Heart left ventricle (tissue), 16 donors: ENCODE measurements at regions of chr1 and their contacts with region 1.

Region 1: GRCh38 chr1:174262349-174263241 is 103.3 kb downstream of the RABGAP1L start:
- DNase-seq: peak in 1 of 5 donors; percentile 30
- ATAC-seq: peak; percentile 51 to 75 (median 64)
- H3K4me3 ChIP-seq: no peak overlapping the region
- H3K27ac ChIP-seq: peak overlapping the region in 3 of 12 donors; percentile 13 to 50 (median 33)
- H3K4me1 ChIP-seq: peaks cover 0 to 36% (median 4%) of the 10 kb centered on the region in 12 donors
- H3K27me3 ChIP-seq: no peaks in the 10 kb centered on the region
- CTCF ChIP-seq: peak; percentile 57 to 77 (median 66)
- POLR2A ChIP-seq: no peak

Region 2: DNA sequence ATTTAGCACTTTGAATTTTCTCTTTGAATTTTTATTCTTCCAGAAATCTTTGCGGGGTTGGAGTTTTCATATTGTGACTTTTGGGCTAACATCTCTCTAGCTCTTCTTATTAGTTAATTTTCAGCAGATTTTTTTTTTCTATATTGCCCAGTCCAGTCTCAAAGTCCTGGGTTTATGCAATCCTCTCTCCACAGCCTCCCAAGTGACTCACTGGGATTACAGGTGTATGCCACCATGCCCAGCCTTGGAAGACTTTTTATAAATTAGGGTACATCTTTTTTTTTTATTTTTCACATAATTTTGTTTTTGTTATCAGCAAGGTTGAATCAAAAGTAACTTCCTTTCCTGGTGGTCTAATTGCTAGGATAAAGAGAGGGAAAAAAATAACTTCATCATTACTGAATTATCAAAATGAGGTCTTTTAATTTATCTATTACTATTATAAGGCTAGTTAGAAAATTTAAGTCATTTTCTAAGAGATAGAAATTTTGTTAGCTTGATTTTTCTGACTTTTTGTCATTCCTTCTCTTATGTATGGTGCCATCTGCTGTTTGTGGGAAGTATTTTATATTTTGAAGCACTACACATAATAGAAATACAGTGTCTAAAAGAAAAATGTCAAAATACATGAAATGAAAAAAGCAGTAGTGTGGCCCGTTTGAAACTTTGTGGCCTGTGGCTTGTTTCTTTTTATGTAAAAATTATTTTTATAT is 463.7 kb after region 1 on chr1:
- intact Hi-C with region 1: loop called in 7 of 10 experiments (anchors 2 to 5 kb)
- DNase-seq: no peak
- ATAC-seq: no peak
- H3K4me3 ChIP-seq: no peak overlapping the region
- H3K27ac ChIP-seq: no peak overlapping the region
- H3K4me1 ChIP-seq: peaks cover 0 to 4% (median 0%) of the 10 kb centered on the region in 12 donors
- H3K27me3 ChIP-seq: no peaks in the 10 kb centered on the region
- CTCF ChIP-seq: peak; percentile 22 to 68 (median 55)
- POLR2A ChIP-seq: no peak

Region 3: GRCh38 chr1:174743654-174744561 is 481.3 kb after region 1 on chr1:
- intact Hi-C with region 1: loop called (anchors 2 to 5 kb)
- DNase-seq: no peak
- ATAC-seq: peak in 1 of 4 donors; percentile 45
- H3K4me3 ChIP-seq: no peak overlapping the region
- H3K27ac ChIP-seq: no peak overlapping the region
- H3K4me1 ChIP-seq: peaks cover 0 to 13% (median 0%) of the 10 kb centered on the region in 12 donors
- H3K27me3 ChIP-seq: no peaks in the 10 kb centered on the region
- CTCF ChIP-seq: peak; percentile 57 to 82 (median 69)
- POLR2A ChIP-seq: no peak

Region 4: GRCh38 chr1:174982971-174983689 is 720.5 kb after region 1 on chr1:
- intact Hi-C with region 1: loop called in 3 of 10 experiments (anchors 10 kb)
- DNase-seq: no peak
- ATAC-seq: no peak
- H3K4me3 ChIP-seq: no peak overlapping the region
- H3K27ac ChIP-seq: no peak overlapping the region
- H3K4me1 ChIP-seq: no peaks in the 10 kb centered on the region
- H3K27me3 ChIP-seq: no peaks in the 10 kb centered on the region
- CTCF ChIP-seq: peak; percentile 43 to 79 (median 69)
- POLR2A ChIP-seq: no peak

Region 5: GRCh38 chr1:174999216-174999925 is 736.8 kb after region 1 on chr1:
- intact Hi-C with region 1: loop called in 3 of 10 experiments (anchors 10 kb)
- DNase-seq: peak; percentile 97 to 99 (median 98)
- ATAC-seq: peak; percentile 92 to 96 (median 94)
- H3K4me3 ChIP-seq: peak overlapping the region; percentile 52 to 94 (median 78)
- H3K27ac ChIP-seq: peak overlapping the region; percentile 93 to 99 (median 97)
- H3K4me1 ChIP-seq: peaks cover 0 to 50% (median 14%) of the 10 kb centered on the region in 12 donors
- H3K27me3 ChIP-seq: no peaks in the 10 kb centered on the region
- CTCF ChIP-seq: no peak
- POLR2A ChIP-seq: peak; percentile 17 to 88